B cell (primary cell): ENCODE measurements at regions of chr5 and their contacts with region 1.

Region 1: GRCh38 chr5:56328753-56329560 is 95.8 kb upstream of the ANKRD55 start:
- DNase-seq: peak; percentile 59
- ATAC-seq: peak; percentile 76
- H3K4me3 ChIP-seq: peak overlapping the region in 1 of 5 experiments; percentile 46
- H3K4me3 Mint-ChIP-seq: peak overlapping the region; percentile 47
- H3K27ac ChIP-seq: peak overlapping the region; percentile 77 to 92
- H3K27ac Mint-ChIP-seq: peak overlapping the region; percentile 91
- H3K4me1 ChIP-seq: peaks cover 41 to 47% of the 10 kb centered on the region in 2 donors
- H3K4me1 Mint-ChIP-seq: peaks cover 60% of the 10 kb centered on the region
- H3K27me3 ChIP-seq: no peaks in the 10 kb centered on the region
- H3K27me3 Mint-ChIP-seq: no peaks in the 10 kb centered on the region
- CTCF ChIP-seq: no peak

Region 2: DNA sequence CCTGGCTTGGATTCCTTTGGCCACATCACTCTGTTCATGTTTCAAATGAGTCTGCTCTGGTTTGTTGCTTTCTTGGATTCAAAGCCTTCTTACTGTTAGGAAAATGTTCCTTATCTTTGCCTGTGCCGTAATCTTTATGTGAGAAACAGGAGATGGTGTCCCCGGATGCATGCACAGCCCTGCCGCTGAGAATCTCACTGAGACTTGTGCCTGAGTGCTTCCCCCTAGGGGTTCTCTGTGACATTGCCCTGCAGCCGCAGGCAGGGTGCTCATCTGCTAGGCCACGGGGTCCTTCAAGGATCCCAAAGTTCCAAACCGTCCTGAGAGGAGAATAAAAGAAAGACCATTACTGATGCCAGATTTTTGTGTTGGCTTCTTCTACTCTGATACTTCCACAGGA is 14.4 kb before region 1 on chr5:
- CTCF ChIA-PET with region 1: interaction called, 5 read pairs
- POLR2A ChIA-PET with region 1: no interaction called
- intact Hi-C with region 1: loop called (anchors 2 kb)
- DNase-seq: no peak
- ATAC-seq: no peak
- H3K4me3 ChIP-seq: no peak overlapping the region
- H3K4me3 Mint-ChIP-seq: peak overlapping the region; percentile 9
- H3K27ac ChIP-seq: no peak overlapping the region
- H3K27ac Mint-ChIP-seq: no peak overlapping the region
- H3K4me1 ChIP-seq: peaks cover 37 to 54% of the 10 kb centered on the region in 2 donors
- H3K4me1 Mint-ChIP-seq: peaks cover 56% of the 10 kb centered on the region
- H3K27me3 ChIP-seq: no peaks in the 10 kb centered on the region
- H3K27me3 Mint-ChIP-seq: no peaks in the 10 kb centered on the region
- CTCF ChIP-seq: peak; percentile 67

Region 3: GRCh38 chr5:56346741-56347539 is 18.0 kb after region 1 on chr5:
- CTCF ChIA-PET with region 1: no interaction called
- POLR2A ChIA-PET with region 1: no interaction called
- intact Hi-C with region 1: loop called (anchors 2 kb)
- DNase-seq: no peak
- ATAC-seq: no peak
- H3K4me3 ChIP-seq: no peak overlapping the region
- H3K4me3 Mint-ChIP-seq: no peak overlapping the region
- H3K27ac ChIP-seq: no peak overlapping the region
- H3K27ac Mint-ChIP-seq: no peak overlapping the region
- H3K4me1 ChIP-seq: peaks cover 40 to 42% of the 10 kb centered on the region in 2 donors
- H3K4me1 Mint-ChIP-seq: peaks cover 51% of the 10 kb centered on the region
- H3K27me3 ChIP-seq: no peaks in the 10 kb centered on the region
- H3K27me3 Mint-ChIP-seq: no peaks in the 10 kb centered on the region
- CTCF ChIP-seq: no peak